ENCODE measurements at regions of chr7 and their contacts with region 1.

Region 1: GRCh38 chr7:37211097-37211880 is 237.4 kb downstream of the ELMO1 start:
- DNase-seq: no peak
- CTCF ChIP-seq: no peak

Region 2: DNA sequence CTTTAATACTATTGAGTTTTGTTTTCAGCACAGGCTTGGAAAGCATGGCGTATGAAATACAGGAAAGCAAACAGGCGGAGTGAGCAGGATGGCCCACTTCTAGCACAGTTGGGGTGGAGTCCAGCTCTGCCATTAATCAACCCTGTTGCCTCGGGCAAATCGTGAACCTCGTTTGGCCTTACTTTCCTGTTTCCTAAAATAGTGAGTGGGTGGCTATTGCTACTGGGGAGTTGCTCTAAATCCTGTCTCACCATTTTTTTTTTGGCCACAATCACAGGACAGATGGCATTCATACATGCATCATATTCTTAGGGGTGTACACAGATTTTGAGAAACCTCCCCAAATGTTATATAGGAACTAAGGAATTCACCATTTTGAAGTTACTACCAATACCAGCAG is 663.9 kb before region 1 on chr7:
- in situ Hi-C with region 1: no loop called
- DNase-seq: no peak
- CTCF ChIP-seq: no peak

Region 3: GRCh38 chr7:37092548-37092947 is 118.7 kb before region 1 on chr7:
- in situ Hi-C with region 1: no loop called
- DNase-seq: no peak
- CTCF ChIP-seq: no peak

Region 4: DNA sequence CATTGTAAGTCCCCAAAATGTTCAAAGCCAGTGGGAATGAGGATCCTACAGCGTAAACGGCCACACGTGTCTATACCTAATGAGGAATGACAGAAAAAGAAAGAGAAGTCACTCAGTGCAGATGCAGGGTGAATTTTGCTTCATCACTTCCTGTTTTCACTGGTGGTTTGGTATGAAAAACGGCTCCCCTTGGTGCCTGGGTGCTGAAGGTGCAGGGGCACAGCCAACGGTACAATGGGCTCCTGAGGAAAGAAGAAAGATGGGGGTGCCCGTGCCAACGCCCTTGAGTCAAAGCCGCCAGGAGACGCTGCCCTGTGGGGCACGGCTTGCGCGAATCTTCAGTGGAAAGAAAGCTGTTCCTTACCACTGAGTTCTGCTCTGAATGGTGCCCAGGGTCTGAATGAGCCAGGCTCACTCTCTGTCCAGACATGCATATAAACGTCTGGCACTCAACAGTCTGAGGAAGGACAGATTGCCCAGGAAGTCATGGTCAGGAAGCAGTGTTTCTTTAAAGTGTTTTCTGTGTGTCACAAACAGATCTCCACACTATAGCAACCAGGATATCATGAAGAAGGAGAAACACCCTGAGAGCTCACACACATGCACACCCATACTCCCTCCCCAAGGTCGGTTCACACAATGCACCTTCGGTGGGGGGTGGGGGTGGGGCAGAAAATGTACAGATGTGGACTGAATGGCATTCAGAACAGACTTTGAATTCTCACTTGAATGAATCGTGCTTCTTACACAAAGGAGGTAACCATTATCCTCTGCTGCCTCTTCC is 131.6 kb after region 1 on chr7:
- in situ Hi-C with region 1: loop called (anchors 10 kb)
- DNase-seq: peak; percentile 48
- CTCF ChIP-seq: peak; percentile 45

Region 5: DNA sequence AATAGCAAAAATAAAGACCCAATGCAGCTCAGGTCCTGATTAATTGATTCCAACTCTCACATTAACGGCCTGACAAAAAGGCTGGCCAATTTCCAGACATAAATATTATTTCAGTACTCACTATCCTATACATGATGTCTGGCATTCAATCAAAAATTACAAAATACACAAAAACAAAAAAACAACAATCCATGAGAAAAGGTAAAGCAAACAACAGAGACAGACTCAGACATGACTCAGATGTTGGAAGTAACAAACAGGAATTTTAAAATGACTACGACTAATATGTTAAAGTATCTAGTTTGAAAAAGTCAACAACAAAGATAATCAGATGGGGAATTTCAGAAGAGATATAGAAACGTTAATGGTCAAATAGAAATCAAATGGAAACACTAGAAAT is 1267.1 kb after region 1 on chr7:
- in situ Hi-C with region 1: no loop called
- DNase-seq: no peak
- CTCF ChIP-seq: no peak